ENCODE measurements at regions of chr1 and their contacts with region 1.

Region 1: DNA sequence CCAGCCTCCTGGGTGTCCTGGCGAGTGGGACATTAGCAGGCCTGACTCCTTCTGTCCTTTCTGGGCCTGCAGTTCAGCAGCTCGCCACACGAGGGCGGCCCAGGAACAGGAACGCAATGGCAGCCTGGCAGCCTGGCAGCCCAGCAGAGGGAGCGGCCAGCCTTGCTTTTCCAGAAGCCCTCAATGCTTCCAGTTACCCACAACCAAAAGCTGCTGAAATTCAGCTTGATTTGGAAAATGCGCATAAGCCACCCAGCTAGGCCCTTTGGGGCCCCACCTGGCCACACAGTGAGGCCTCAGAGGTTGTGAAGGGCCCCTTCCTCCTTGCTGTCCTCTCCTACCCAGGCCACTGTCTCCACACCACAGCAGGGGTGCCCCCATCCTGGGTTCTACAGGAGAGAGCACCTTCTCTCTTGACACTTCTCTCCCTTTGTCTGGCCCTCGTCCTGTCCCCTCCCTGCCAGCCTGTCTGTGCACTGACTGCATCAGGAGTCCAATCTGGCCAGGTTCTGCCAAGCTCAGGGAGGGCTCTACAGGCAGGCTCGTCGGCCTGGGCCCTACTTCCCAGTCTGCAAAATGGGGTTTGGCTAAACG is 103.4 kb upstream of the VAMP3 start:
- DNase-seq: peak; percentile 96

Region 2: GRCh38 chr1:7690496-7691182 is 22.9 kb after region 1 on chr1:
- intact Hi-C with region 1: loop called in 1 of 2 experiments (anchors 1 kb)
- DNase-seq: no peak

Region 3: DNA sequence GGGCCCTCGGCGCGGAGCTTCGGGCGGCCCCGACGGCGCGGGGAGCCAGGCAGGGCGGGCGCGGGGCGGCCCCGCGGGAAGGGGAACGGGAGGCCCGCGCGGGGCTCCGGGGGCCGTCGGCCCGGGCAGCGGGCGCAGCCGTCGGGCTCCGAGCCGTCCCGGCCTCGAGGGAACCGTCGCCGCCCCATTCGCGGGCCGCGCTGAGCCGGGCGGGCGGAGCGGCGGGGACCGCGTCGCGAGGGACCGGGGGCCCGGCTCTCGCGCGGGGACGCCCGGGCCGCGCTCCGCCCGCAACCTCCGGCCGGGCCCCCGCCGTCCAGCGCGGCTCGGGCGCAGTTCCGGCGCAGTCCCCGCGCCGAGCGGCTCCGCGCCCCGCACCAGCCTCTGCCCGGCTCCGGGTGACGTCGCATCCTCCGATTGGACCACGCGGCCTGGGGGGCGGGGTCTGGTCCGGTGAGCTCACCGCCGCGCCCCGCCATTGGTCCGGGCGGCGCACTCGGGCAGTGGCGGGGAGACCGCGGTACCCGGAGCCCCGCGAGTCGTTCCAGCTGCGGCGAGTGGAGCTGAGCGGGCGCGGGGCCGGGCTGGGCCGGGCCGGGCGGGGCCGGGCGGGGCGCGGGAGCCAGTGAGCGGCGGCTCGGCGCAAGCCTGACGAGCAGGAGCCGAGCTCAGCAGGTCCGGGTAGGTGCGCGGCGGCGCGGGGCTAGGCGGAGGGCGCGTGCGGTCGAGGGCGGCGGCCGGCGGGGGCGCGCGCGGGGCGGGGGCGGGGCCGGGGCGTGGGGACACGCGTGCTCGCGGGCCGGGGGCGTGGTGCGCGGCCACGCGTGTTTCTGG is 36.7 kb after region 1 on chr1:
- intact Hi-C with region 1: loop called in 1 of 2 experiments (anchors 5 kb)
- DNase-seq: peak; percentile 97

Region 4: DNA sequence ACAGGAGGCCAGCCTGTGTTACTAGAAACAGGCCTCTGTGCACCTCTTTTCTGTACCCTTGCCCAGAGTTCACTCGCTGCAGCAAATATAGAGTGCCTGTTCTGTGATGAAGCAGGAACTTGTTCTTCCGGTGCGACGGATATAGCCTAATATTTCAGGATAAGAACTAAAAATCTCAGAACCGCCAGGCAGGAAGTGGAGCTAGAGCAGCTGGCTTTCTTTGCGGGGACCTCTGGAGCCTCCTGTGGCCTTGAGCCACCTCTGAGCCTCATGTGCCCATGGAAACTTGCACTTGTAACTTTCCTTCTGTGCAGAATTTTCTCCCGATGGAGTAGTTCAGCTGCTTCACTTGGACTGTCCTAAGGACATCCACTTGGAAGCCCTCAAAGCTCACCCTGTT is 58.9 kb after region 1 on chr1:
- intact Hi-C with region 1: no loop called
- DNase-seq: no peak

Region 5: DNA sequence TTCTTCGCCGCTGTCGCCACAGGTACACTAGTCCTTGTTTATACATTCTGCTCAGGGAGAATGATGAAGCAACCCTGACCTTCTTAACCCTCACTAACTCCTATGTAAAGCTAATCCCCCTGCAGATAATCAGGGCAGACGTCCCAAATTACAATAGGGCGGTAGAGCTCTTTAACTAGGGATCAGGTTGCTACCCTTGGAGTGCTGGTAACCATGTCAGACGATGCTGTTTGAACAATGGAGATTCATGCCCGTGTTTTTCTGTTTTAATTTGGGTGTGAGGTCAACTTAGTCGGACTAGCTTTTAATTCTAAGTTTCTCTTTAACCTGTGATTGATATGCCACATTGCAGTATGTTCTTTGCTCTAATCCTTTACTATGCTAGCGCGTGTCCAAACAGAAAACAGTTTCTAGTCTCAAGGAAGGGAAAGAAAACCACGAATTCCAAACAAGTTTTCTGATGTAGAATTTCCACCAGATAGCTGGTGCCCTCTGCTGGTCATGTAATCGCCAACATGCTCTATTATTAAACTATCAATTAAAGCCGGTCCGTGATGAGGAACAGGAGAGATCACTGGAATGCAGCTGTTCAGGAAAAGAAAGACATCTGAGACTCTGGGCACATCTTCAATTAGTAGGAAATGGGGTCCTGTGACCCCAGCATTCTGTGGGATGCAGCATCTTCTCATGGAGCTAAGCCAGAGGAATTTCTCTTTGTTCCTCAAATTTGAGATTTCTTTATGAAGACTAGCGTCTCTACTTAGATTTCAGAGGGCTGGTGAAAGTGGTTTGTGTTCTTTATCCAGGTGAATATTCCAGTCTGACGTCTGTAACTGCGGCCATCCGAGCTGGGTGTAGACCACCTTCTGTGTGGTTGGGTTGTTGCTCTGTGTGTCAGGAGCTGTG is 85.0 kb after region 1 on chr1:
- intact Hi-C with region 1: loop called (anchors 2 kb)
- DNase-seq: no peak

Region 6: GRCh38 chr1:9388335-9389180 is 1720.8 kb after region 1 on chr1:
- intact Hi-C with region 1: no loop called
- DNase-seq: no peak